Right cardiac atrium (tissue), 5 donors: ENCODE measurements at regions of chr13 and their contacts with region 1.

Region 1: DNA sequence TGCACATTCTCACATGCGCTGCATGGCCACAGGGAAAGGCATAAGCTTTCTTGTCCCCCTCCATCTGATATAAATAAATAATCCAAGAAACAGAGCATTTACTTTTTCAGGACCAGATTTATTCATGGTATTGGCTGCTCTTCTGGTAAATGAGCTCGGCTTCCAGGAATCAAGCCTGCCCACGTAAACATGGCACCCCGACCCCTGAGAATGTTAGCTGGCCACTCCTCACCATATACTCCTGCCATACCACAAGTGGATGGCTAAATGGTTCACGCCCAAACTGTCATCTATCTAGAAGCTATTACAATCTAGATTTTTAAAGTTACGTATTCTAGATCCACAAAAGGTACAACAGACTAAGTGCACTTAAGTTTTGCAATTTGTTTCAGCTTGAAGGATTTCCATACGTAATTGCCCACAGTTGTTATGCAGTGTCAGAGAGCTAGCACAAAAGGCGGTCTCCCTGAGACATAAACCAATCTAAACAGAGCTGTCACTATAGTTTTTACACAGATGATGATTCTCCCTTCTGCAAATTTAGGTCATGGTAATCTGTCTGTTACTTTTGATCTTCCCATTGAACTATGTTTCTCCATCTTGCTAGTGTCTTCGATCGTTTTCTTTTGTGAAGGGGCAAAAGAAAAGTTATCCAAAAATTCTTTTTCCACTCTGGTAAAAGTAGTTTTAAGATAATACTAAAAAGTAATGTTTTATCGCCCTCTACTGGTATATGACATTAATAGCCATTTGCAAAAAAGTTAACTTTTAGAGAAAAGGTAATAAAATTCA is 16.2 kb upstream of the FOXO1 start:
- DNase-seq: no peak
- ATAC-seq: no peak
- H3K4me3 ChIP-seq: no peak overlapping the region
- H3K27ac ChIP-seq: no peak overlapping the region
- H3K4me1 ChIP-seq: no peaks in the 10 kb centered on the region
- H3K27me3 ChIP-seq: no peaks in the 10 kb centered on the region

Region 2: GRCh38 chr13:39684531-39685137 is 998.0 kb before region 1 on chr13:
- intact Hi-C with region 1: loop called in 3 of 4 experiments (anchors 10 kb)
- DNase-seq: no peak
- ATAC-seq: no peak
- H3K4me3 ChIP-seq: no peak overlapping the region
- H3K27ac ChIP-seq: no peak overlapping the region
- H3K4me1 ChIP-seq: no peaks in the 10 kb centered on the region
- H3K27me3 ChIP-seq: no peaks in the 10 kb centered on the region

Region 3: GRCh38 chr13:39765801-39766463 is 916.7 kb before region 1 on chr13:
- intact Hi-C with region 1: loop called in 3 of 4 experiments (anchors 10 kb)
- DNase-seq: peak; percentile 38 to 71 (median 68)
- ATAC-seq: peak; percentile 84 to 94
- H3K4me3 ChIP-seq: no peak overlapping the region
- H3K27ac ChIP-seq: no peak overlapping the region
- H3K4me1 ChIP-seq: peaks cover 2% of the 10 kb centered on the region
- H3K27me3 ChIP-seq: no peaks in the 10 kb centered on the region

Region 4: GRCh38 chr13:39777527-39778061 is 905.1 kb before region 1 on chr13:
- intact Hi-C with region 1: loop called in 2 of 4 experiments (anchors 10 kb)
- DNase-seq: no peak
- ATAC-seq: peak in 1 of 2 donors; percentile 66
- H3K4me3 ChIP-seq: no peak overlapping the region
- H3K27ac ChIP-seq: no peak overlapping the region
- H3K4me1 ChIP-seq: peaks cover 2% of the 10 kb centered on the region
- H3K27me3 ChIP-seq: no peaks in the 10 kb centered on the region

Region 5: DNA sequence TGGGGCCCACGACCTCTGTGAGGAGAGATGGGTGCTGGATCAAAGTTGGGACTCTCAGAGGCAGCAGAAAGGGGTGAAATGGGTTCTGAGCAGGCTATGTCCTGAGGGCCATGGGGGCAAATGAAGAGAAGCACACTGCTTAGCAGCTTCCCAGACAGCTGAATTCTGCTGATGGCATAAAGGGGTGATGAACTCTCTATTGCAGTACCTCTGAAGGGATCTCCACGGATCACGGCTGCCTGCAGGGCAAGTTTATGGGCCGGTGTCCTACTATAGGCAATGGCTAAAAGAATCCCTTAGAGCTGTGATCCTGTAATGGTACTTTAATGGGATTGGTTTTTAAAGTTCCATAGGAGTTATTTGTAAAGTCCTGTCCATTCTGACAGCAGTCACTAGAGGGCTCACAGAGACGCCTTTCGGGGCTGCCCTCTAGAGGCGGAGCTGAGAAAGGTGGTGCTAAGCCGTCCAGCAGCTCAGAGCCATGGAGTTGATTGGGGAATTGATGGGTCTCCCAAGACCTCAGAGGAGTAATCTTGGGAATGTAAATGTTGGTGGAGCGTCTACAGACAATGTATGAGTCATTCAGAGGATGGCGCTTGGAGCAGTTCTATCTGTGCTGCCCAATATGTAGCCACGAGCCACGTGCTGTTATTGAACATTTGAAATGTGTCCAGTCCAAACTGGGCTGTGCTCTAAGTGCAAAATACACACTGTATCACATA is 739.9 kb before region 1 on chr13:
- intact Hi-C with region 1: loop called in 2 of 4 experiments (anchors 10 kb)
- DNase-seq: peak; percentile 74 to 85 (median 81)
- ATAC-seq: peak; percentile 91 to 92
- H3K4me3 ChIP-seq: no peak overlapping the region
- H3K27ac ChIP-seq: no peak overlapping the region
- H3K4me1 ChIP-seq: peaks cover 3% of the 10 kb centered on the region
- H3K27me3 ChIP-seq: no peaks in the 10 kb centered on the region

Region 6: GRCh38 chr13:40069173-40070044 is 613.2 kb before region 1 on chr13:
- intact Hi-C with region 1: loop called (anchors 5 to 10 kb)
- DNase-seq: peak; percentile 77 to 91 (median 87)
- ATAC-seq: peak; percentile 92
- H3K4me3 ChIP-seq: no peak overlapping the region
- H3K27ac ChIP-seq: peak overlapping the region; percentile 24
- H3K4me1 ChIP-seq: no peaks in the 10 kb centered on the region
- H3K27me3 ChIP-seq: no peaks in the 10 kb centered on the region

Region 7: GRCh38 chr13:40982772-40983171 is 300.1 kb after region 1 on chr13:
- intact Hi-C with region 1: no loop called
- DNase-seq: no peak
- ATAC-seq: peak; percentile 76 to 88
- H3K4me3 ChIP-seq: peak overlapping the region; percentile 76
- H3K27ac ChIP-seq: no peak overlapping the region
- H3K4me1 ChIP-seq: peaks cover 7% of the 10 kb centered on the region
- H3K27me3 ChIP-seq: no peaks in the 10 kb centered on the region